ENCODE measurements at regions of chr10 and their contacts with region 1.

Region 1: DNA sequence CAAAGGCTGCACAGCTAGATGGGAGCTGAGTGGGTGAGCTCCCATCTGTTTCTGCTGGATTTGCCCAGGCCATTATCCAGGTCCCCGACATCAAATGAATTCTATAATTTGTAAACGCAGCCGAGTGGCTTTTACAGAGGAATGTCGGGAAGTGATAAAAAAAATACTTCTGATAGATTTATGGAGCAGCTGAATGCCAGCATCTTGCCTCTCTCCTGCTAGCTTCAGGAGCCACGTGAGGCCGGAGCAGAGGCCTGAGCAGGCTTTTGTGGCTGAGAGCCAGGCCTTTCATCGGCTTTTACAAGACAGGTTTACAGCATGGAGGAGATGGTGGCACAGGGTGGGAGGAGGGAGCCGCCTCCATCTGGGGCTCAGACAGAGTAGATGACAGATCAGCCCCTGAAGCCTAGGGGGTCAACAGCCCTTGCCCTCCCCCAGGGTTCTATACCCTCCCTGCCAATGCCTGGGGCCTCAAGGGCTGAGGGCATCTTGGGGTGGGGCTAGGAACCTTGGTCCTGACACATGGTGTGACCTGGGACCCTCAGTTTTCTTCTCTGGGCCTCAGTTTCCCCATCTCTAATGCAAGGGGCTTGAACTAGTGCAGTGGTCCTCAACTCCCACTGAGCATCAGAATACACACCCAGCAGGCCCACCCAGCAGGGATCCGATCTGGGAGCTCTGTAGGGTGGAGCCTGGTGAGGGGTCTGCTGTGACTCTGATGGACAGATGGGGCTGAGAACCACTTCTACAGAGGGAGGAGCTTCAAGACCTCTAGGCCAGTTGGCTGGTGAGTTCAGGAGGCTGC is 44.2 kb upstream of the PCBD1 start:
- DNase-seq: no peak

Region 2: DNA sequence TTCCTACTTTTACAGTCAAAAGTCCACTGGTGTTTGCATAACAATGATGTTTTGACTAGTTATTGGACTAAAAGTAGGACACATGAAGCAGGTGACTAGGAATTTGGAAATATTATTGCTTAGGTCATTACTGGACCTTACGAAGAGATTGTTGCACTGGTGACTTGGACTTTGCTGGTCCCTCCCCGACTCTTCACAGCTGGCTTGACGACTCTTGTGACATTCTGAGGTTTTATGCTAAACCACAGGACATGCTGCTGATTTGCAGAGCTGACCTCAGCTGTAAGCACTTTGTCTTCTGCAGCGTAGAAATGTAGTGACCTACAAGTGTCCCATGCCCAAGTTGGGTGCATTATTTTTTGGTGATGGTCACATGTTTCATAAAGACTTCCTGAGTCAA is 66.2 kb before region 1 on chr10:
- intact Hi-C with region 1: no loop called
- DNase-seq: no peak

Region 3: DNA sequence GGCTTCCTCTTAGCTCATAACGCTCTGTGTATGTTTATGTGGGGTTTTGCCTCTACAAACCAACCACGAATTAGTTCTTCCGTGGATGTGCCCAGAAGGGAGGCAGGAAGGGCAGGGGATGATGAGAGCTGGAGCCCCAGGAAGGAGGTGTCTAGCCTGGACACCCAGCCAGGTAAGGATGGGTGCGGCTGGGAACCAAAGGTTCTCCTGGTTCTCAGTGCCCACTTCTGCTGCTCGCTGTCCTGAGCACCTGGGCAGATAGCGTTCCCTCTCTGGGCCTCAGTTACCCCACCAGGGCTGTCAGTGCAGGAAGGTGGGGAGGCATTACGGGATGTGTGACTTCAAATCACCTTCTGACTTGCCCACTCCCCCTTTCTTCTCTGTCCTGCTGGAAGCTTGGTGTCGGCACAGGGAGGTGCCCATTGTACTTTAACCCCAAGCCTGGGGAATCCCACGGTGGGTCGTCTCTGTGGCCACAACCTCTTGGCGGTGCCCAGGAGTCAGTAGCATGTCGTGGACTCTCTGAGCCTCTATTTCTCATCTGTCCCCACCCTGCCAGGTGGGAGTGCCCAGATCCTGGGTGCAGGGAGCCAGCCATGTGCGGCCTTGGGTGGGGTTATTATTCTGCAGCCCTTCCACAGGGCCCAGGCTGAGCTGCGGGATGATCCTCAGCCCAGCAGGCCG is 25.5 kb before region 1 on chr10:
- intact Hi-C with region 1: loop called in 1 of 2 experiments (anchors 1 kb)
- DNase-seq: peak; percentile 57

Region 4: GRCh38 chr10:71176661-71177060 is 244.1 kb after region 1 on chr10:
- intact Hi-C with region 1: loop called in 1 of 2 experiments (anchors 5 kb)
- DNase-seq: no peak

Region 5: DNA sequence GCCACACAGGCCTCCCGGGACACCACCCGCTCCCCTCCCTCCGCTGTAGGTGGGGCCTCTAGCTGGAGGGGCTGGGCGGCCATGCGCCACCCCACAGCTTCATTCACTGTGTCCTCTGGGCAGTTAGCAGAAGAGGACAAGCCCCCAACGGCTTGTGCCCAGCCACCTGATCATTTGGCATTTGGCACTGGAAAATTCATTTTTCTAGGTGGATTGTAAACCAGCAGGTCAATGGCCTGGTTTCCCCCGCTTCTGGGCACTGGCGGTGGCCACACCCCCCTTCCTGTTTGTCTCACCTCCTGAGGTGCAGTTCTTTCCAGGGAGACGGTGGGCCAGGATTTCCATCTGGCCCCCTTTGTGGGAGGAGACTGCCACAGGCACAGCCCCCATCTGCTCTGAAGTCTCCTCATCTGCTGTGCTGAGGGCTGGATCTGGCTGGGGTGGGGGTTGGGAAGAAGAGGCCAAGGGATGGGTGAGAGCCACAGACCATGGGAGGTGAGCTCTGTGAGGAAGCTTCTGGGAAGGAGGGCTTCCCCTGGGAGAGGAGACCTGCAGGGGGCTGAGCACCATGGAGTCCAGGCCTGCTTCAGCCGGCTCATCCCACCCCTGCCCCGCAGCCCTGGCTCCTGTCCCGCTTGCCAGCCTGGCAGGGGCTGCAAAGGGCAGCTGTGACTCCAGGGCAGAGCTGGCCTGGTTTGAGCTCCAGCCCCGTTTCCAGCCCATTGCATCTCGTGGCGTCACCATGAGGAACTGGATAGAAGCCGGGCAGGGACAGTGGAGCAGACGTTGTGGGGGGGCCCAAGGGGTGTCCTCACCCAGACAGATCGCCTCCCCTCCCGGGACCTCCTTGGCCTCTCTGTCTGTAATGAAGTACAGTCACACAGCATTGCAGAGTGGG is 346.3 kb after region 1 on chr10:
- intact Hi-C with region 1: loop called in 1 of 2 experiments (anchors 1 kb)
- DNase-seq: no peak

Measured in posterior vena cava (tissue), 2 donors.